WTC11 (cell line): ENCODE measurements at regions of chr13 and their contacts with region 1.

Region 1: DNA sequence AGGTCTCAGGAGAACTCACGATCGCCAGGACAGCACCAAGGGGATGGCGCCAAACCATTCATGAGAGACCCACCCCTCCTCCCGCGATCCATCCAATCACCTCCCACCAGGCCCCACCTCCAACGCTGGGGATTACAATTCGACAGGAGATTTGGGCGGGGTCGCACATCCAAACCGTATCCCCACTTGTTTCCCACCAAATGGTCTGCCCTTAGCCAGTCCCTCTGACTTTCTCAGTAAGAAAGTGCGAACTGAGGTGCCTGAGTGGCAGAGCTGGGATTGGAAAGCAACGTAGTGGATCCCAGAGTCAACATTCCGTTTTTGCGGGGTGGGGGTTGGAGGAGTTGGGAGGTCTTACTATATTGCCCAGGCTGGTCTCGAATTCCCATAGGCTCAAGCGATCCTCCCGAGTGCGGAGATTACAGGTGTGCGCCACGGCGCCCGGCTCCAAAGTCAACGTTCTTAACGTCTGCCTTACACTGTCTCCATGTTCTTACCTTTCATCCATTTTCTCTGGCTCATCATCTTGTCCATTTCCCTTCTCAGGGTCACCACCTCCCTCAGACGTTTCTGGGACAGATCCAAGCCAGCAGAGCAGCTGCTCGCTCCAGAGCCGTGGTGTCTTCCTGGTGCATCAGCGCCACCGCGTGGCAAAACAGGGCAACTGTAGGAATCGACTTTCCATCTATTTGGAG is 102.7 kb upstream of the ABCC4 start:
- DNase-seq: peak; percentile 90
- ATAC-seq: peak; percentile 91
- H3K4me3 Mint-ChIP-seq: peak overlapping the region; percentile 74
- H3K27ac Mint-ChIP-seq: peak overlapping the region; percentile 43
- H3K4me1 Mint-ChIP-seq: peaks cover 5% of the 10 kb centered on the region
- H3K27me3 Mint-ChIP-seq: no peaks in the 10 kb centered on the region; the same call in 1 of the 2 replicates
- CTCF ChIP-seq: peak; percentile 85

Region 2: DNA sequence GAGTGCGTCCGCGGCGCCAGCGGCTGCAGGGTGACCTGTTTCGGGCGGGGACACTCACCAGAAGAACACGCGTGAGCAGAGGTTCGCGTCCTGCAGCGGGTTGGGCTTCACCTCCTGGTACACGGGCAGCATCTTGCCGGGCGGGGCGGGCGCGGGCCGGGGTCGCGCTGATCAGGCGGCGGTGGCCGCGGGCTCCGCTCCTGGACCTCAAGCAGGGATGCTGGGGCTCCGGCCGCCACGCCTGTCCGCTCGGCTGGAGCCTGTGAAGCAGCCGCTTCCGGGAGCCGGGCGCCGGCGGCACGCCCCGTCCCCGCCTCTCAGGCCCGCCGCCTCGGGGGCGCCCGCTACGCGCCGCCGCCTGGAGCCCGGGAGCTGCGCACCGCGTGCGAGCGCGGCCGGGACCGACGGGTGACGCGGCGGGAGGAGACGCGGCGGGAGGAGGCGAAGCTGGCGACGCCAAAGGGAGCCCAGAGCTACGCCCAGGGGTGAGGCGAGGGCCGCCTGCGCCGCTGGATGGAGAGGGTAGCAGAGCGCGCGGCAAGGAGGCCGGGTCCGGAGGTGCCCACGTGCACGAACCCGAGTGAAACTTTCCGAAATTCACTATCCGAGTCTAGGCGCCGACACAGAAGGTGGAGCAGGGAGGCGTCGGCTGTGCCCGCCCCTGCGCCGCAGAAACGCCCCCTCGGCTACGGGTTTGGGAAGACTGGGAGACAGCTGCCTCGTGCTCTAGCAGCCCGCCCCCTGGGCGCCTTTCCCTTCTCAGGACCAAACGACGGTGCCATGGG is 102.6 kb before region 1 on chr13 and contains the start of gene ABCC4:
- CTCF ChIA-PET with region 1: interaction called, 80 read pairs
- POLR2A ChIA-PET with region 1: interaction called, 3 read pairs
- DNase-seq: peak; percentile 69
- ATAC-seq: peak; percentile 76
- H3K4me3 Mint-ChIP-seq: peak within 1 kb of the TSS; percentile 80
- H3K27ac Mint-ChIP-seq: no peak within 1 kb of the TSS
- H3K4me1 Mint-ChIP-seq: peaks cover 11% of the 10 kb centered on the region
- H3K27me3 Mint-ChIP-seq: peaks cover 41% of the 10 kb centered on the region
- CTCF ChIP-seq: no peak
- total RNA-seq, gene ABCC4: 7.2 to 7.8 TPM (median 7.2 TPM) in 3 replicates

Region 3: DNA sequence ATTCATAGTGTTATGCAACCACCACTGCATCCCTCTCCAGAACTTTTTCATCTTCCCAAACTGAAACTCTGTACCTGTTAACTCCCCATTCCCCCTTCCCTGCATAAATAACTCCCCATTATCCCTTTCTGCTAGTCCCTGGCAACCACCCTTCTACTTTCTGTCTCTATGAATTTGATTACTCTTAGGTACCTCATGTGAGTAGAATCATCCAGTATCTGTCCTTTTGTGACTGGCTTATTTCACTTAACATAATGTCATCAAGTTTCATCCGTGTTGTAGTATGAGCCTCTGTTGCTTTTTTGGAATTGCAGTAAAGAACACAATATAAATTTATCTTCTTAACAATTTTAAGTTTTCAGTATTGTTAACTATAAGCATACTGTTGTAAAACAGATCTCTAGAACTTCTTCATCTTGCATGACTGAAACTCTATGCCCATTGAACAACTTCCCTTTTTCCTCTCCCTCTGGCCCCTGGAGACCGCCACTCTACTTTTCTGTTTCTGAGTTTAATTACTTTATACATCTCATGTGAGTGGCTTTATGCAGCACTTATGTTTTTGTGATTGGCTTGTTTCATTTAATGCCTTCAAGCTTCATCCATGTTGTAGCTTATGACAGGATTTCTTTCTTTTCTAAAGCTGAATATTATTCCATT is 15.4 kb before region 1 on chr13:
- CTCF ChIA-PET with region 1: interaction called, 10 read pairs
- POLR2A ChIA-PET with region 1: no interaction called
- DNase-seq: no peak
- ATAC-seq: no peak
- H3K4me3 Mint-ChIP-seq: no peak overlapping the region
- H3K27ac Mint-ChIP-seq: no peak overlapping the region
- H3K4me1 Mint-ChIP-seq: no peaks in the 10 kb centered on the region
- H3K27me3 Mint-ChIP-seq: no peaks in the 10 kb centered on the region
- CTCF ChIP-seq: no peak

Region 4: DNA sequence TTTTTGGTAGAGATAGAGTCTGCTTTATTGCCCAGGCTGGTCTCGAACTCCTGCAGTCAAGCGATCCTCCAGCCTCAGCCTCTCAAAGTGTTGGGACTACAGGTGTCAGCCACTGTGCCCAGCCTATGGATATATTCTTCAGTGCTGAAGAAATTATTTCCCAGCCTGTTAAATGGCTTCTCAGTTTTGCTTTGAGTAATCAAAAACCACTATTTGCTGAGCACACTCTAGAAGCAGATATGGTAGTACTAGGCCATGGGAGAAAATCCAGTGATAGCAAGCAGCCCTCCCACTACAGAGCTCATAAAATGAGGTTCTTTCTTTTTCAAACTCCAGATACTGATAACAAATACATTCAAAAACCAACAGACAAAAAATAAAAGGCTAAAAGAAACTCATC is 68.0 kb after region 1 on chr13:
- CTCF ChIA-PET with region 1: interaction called, 17 read pairs
- POLR2A ChIA-PET with region 1: no interaction called
- DNase-seq: no peak
- ATAC-seq: no peak
- H3K4me3 Mint-ChIP-seq: no peak overlapping the region
- H3K27ac Mint-ChIP-seq: no peak overlapping the region
- H3K4me1 Mint-ChIP-seq: peaks cover 13% of the 10 kb centered on the region
- H3K27me3 Mint-ChIP-seq: no peaks in the 10 kb centered on the region; the same call in 1 of the 2 replicates
- CTCF ChIP-seq: no peak

Region 5: DNA sequence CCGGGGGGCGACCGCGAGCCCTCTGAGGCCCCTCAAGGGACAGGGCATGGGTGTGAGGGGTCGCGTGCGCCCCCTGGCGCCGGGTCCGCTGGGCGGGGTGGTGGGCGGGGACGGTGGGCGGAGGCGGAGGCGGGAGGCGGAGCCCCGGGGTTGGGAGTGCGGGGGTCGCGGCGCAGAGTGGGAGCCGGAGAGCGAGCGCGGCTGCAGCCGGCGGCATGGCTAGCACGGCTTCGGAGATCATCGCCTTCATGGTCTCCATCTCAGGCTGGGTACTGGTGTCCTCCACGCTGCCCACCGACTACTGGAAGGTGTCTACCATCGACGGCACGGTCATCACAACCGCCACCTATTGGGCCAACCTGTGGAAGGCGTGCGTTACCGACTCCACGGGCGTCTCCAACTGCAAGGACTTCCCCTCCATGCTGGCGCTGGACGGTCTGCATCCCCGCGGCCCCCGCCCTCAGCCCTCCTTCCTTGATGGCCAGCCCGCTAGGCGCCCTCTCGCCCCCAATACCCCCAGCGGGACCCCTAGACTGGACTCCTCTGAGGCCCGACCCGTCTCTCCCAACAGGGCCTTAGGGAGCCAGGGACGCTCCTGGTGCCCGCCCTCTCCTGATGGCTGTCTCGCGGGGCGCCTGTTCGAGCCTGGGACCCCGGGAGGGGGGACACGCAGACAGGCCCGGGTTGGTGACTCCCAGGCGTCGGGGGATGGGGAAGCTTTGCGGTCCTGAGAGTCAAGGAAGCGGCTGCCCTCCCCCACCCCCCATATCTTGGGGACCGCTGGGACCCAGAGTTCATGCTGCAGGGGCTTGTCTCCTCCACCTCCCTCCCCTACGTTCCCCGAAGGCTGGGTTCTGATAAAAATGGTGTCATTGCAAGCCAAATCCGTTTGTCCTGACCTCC is 148.8 kb after region 1 on chr13 and contains the start of gene CLDN10:
- CTCF ChIA-PET with region 1: no interaction called
- POLR2A ChIA-PET with region 1: no interaction called
- DNase-seq: peak; percentile 86
- ATAC-seq: peak; percentile 86
- H3K4me3 Mint-ChIP-seq: peak within 1 kb of the TSS; percentile 92
- H3K27ac Mint-ChIP-seq: peak within 1 kb of the TSS; percentile 75
- H3K4me1 Mint-ChIP-seq: peaks cover 48% of the 10 kb centered on the region
- H3K27me3 Mint-ChIP-seq: peaks cover 7% of the 10 kb centered on the region; the same call in 1 of the 2 replicates
- CTCF ChIP-seq: peak; percentile 55; the same call in 1 of the 2 replicates
- total RNA-seq, gene CLDN10: 24.7 to 29.6 TPM (median 29.5 TPM) in 3 replicates

Region 6: GRCh38 chr13:95834134-95834765 is 430.3 kb after region 1 on chr13:
- CTCF ChIA-PET with region 1: interaction called, 12 read pairs
- POLR2A ChIA-PET with region 1: no interaction called
- DNase-seq: peak; percentile 63
- ATAC-seq: peak; percentile 86
- H3K4me3 Mint-ChIP-seq: no peak overlapping the region
- H3K27ac Mint-ChIP-seq: no peak overlapping the region
- H3K4me1 Mint-ChIP-seq: peaks cover 4% of the 10 kb centered on the region
- H3K27me3 Mint-ChIP-seq: no peaks in the 10 kb centered on the region; the same call in 1 of the 2 replicates
- CTCF ChIP-seq: peak; percentile 82